Esophagus squamous epithelium (tissue), 5 donors: ENCODE measurements at regions of chr19 and their contacts with region 1.

Region 1: GRCh38 chr19:38245826-38246498 is 10.2 kb downstream of the PPP1R14A start:
- DNase-seq: no peak
- H3K4me3 ChIP-seq: no peak overlapping the region
- H3K27ac ChIP-seq: peak overlapping the region in 2 of 4 donors; percentile 77 to 82
- H3K4me1 ChIP-seq: peaks cover 0 to 55% (median 4%) of the 10 kb centered on the region in 3 donors
- H3K27me3 ChIP-seq: no peaks in the 10 kb centered on the region
- CTCF ChIP-seq: no peak
- POLR2A ChIP-seq: no peak

Region 2: DNA sequence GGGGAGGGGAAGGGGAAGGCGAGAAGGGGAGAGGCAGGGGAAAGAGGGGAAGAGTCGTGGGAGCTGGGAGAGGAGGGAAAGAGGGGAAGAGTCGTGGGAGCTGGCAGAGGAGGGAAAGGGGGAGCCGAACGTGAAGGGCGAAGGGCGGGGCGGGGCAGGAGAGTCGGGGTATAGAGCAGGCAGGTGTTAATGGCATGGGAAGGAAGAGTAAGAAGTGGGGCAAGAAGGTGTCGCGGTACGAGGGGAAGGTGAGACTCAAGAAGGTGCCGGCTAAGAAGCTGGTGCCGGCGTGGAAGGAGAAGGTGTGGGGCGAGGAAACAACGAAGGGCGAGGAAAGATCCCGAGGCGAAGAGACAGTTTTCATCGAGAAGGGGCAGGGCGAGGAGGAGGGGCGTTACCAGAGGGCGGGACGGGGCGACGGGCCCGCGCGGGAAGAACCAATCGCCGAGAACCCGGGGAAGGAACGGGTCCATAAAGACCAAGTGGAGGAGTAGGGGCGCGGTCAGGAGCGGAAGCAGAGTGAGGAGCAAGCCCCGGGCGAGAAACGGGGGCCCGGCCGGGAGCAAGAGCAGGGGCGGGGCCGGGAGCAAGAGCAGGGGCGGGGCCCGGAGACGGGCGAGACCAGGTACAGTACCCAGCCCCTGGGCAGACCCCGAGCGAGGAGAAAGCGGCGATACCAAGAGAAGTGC is 90.1 kb after region 1 on chr19:
- intact Hi-C with region 1: loop called (anchors 2 kb)
- DNase-seq: peak; percentile 78
- H3K4me3 ChIP-seq: peak overlapping the region; percentile 73 to 90 (median 82)
- H3K27ac ChIP-seq: peak overlapping the region; percentile 97 to 100 (median 100)
- H3K4me1 ChIP-seq: peaks cover 10 to 35% (median 14%) of the 10 kb centered on the region in 3 donors
- H3K27me3 ChIP-seq: no peaks in the 10 kb centered on the region
- CTCF ChIP-seq: no peak
- POLR2A ChIP-seq: peak in 1 of 4 donors; percentile 61

Region 3: DNA sequence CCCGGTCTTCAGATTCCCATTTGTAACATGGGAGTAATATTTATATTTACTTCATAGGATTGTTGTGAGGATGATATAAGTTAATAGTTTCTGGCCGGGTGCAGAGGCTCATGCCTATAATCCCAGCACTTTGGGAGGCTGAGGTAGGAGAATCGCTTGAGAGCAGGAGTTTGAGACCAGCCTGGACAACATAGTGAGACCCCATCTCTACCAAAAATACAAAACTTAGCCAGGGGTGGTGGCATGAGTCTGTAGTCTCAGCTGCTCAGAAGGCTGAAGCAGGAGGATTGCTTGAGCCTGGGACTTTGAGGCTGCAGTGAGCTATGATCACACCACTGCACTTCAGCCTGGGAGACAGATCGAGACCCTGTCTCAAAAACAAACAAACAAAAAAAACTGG is 100.9 kb after region 1 on chr19:
- intact Hi-C with region 1: no loop called
- DNase-seq: no peak
- H3K4me3 ChIP-seq: no peak overlapping the region
- H3K27ac ChIP-seq: no peak overlapping the region
- H3K4me1 ChIP-seq: peaks cover 0 to 9% (median 0%) of the 10 kb centered on the region in 3 donors
- H3K27me3 ChIP-seq: peaks cover 0 to 2% (median 0%) of the 10 kb centered on the region in 4 donors
- CTCF ChIP-seq: no peak
- POLR2A ChIP-seq: no peak